IMR-90 (cell line): ENCODE measurements at regions of chr11 and their contacts with region 1.

Region 1: DNA sequence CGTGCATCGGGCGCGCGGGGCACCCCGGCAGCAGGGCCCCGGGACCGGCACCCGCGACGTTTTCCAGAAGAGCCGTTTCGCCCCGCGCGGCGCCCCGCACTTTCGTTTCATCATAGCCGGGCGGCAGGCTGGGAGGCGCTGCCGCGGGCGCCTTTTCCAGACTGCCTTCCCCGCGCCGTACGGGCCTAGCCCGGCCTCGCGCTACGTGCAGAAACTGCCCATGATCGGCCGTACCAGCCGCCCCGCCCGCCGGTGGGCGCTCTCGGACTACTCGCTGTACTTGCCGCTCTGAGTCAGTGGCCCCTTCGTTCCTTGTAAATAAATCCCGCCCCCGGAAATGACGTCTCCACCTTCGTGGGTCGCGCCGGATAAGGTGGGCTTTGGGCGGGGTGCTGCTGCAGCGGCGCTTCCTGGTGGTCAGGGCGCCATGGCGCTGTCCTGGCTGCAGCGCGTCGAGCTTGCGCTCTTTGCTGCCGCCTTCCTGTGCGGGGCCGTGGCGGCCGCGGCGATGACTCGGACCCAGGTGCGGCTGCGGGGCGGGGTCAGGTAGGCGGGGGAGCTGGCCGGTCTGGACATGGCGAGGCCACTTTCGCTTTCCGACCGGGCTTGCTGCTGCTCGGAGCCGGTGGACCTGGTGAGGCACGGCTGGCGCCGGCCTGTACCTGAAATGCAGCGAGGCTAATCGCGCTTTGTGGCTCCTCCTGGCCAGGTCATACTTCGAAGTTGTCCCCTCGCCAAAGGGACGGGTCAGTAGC is at the start of gene TMEM179B:
- DNase-seq: peak; percentile 98
- ATAC-seq: peak; percentile 68
- H3K4me3 ChIP-seq: peak within 1 kb of the TSS; percentile 94
- H3K27ac ChIP-seq: peak within 1 kb of the TSS; percentile 89
- H3K4me1 ChIP-seq: peaks cover 11% of the 10 kb centered on the region
- H3K27me3 ChIP-seq: no peaks in the 10 kb centered on the region
- CTCF ChIP-seq: peak; percentile 74
- POLR2A ChIP-seq: peak; percentile 81
- RAD21 ChIP-seq: peak; percentile 57
- total RNA-seq, gene TMEM179B: 20.0 and 29.4 TPM in 2 replicates

Region 2: GRCh38 chr11:62712413-62712812 is 74.8 kb before region 1 on chr11:
- CTCF ChIA-PET with region 1: no interaction called
- POLR2A ChIA-PET with region 1: no interaction called
- dilution Hi-C with region 1: no loop called
- in situ Hi-C with region 1: no loop called
- intact Hi-C with region 1: no loop called
- DNase-seq: peak; percentile 41
- ATAC-seq: no peak
- H3K4me3 ChIP-seq: no peak overlapping the region
- H3K27ac ChIP-seq: peak overlapping the region; percentile 41; the same call in 1 of the 2 replicates
- H3K4me1 ChIP-seq: peaks cover 12% of the 10 kb centered on the region
- H3K27me3 ChIP-seq: no peaks in the 10 kb centered on the region
- CTCF ChIP-seq: no peak
- POLR2A ChIP-seq: no peak
- RAD21 ChIP-seq: no peak

Region 3: DNA sequence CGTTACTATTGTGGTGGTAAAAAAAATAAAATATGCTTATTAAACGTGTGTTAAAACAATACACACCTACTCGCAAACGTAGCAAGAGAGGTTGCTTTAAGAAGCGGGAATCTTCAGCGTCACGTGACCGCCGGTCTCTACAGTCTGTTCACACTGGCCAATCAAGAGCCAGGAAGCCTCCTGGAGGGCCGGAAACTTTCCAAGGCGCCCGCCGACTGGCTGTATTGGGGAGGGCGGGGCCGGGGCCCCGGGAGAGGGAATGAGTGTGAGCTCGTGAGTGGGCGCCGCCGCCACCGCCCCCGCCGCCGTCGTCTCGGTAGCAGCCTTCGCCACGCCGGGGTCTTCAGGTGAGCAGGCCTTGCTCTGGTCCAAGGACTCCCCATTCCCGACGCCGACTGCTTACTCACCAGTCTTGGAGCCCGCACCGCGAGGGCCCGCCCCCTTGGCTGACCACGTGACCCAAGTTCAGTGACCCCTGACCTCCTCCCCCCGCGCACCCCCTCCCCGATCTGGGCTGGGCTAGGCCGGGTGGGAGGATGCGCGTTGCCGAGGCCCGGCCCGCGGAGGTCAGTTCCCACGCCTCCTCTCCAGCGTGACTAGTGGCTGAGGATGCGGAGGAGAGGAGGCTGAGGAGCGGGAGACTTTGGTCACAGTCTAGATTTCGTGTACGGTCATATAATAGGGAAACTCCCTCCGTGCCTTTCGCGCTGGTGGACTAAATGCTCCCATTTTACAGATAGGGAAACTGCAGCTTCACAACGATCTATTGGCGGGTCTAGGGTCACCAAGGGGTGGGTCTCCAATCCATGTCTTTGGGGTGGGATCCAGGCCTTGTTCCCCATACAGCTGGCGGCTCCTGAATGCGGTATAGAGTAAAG is 15.8 kb before region 1 on chr11 and contains the start of gene TAF6L:
- CTCF ChIA-PET with region 1: interaction called, 26 read pairs
- POLR2A ChIA-PET with region 1: no interaction called
- dilution Hi-C with region 1: no loop called
- in situ Hi-C with region 1: no loop called
- intact Hi-C with region 1: no loop called
- DNase-seq: peak; percentile 95
- ATAC-seq: peak; percentile 99
- H3K4me3 ChIP-seq: peak within 1 kb of the TSS; percentile 81
- H3K27ac ChIP-seq: peak within 1 kb of the TSS; percentile 96
- H3K4me1 ChIP-seq: peaks cover 3% of the 10 kb centered on the region
- H3K27me3 ChIP-seq: no peaks in the 10 kb centered on the region
- CTCF ChIP-seq: no peak
- POLR2A ChIP-seq: peak; percentile 75
- RAD21 ChIP-seq: no peak
- total RNA-seq, gene TAF6L: 8.1 and 9.5 TPM in 2 replicates

Region 4: GRCh38 chr11:62805076-62805892 is 18.1 kb after region 1 on chr11 and contains the start of gene NXF1:
- CTCF ChIA-PET with region 1: interaction called, 4 read pairs
- POLR2A ChIA-PET with region 1: interaction called, 3 read pairs
- dilution Hi-C with region 1: no loop called
- in situ Hi-C with region 1: no loop called
- intact Hi-C with region 1: loop called (anchors 2 kb)
- DNase-seq: peak; percentile 92
- ATAC-seq: peak; percentile 87
- H3K4me3 ChIP-seq: peak within 1 kb of the TSS; percentile 82
- H3K27ac ChIP-seq: peak within 1 kb of the TSS; percentile 71
- H3K4me1 ChIP-seq: peaks cover 26% of the 10 kb centered on the region
- H3K27me3 ChIP-seq: no peaks in the 10 kb centered on the region
- CTCF ChIP-seq: no peak
- POLR2A ChIP-seq: peak; percentile 100
- RAD21 ChIP-seq: no peak
- total RNA-seq, gene NXF1: 26.3 and 27.5 TPM in 2 replicates

Region 5: DNA sequence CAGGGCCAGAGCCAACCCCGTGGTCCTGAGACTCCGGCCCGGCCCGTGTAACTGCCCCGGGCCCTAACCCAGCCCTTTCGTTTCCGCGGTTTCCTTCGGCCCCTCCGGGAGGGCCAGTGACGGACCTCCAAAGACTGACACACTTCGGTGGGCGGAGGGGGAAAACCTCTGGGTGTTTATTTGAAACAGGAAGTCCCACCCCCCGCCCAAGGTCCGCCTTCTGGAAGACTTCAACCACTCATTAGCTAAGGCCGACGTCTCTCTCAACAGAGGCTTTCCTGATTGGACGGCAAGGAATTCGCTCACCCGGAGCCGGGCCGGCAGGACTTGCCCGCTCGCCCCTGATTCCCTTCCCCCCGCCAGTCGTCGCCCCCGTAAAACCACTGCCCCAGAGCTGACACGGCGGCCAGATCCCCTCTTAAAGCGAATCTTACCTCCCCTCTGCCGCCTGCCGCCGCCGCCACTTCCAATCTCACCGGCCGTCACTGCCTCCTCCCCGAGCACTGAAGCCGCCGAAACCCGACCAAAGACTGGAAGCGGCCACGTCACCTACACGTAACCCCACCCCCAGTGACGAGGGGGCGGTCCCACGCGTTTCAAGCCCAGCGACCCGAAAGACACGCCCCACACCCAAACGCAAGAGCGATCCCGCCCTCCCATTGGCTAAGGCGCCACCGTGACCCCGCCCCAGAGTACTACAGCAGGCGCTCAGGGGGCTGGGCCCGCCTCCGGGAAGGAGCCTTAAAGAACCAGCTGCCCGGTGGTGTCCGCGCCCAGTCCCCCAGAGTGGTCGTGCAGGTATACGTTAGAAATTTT is 44.5 kb after region 1 on chr11 and contains the start of gene STX5:
- CTCF ChIA-PET with region 1: no interaction called
- POLR2A ChIA-PET with region 1: interaction called, 14 read pairs
- dilution Hi-C with region 1: no loop called
- in situ Hi-C with region 1: no loop called
- intact Hi-C with region 1: loop called (anchors 2 kb)
- DNase-seq: peak; percentile 99
- ATAC-seq: peak; percentile 95
- H3K4me3 ChIP-seq: peak within 1 kb of the TSS; percentile 94
- H3K27ac ChIP-seq: peak within 1 kb of the TSS; percentile 95
- H3K4me1 ChIP-seq: peaks cover 12% of the 10 kb centered on the region
- H3K27me3 ChIP-seq: no peaks in the 10 kb centered on the region
- CTCF ChIP-seq: no peak
- POLR2A ChIP-seq: peak; percentile 96
- RAD21 ChIP-seq: no peak
- total RNA-seq, gene STX5: 48.6 and 49.5 TPM in 2 replicates

Region 6: DNA sequence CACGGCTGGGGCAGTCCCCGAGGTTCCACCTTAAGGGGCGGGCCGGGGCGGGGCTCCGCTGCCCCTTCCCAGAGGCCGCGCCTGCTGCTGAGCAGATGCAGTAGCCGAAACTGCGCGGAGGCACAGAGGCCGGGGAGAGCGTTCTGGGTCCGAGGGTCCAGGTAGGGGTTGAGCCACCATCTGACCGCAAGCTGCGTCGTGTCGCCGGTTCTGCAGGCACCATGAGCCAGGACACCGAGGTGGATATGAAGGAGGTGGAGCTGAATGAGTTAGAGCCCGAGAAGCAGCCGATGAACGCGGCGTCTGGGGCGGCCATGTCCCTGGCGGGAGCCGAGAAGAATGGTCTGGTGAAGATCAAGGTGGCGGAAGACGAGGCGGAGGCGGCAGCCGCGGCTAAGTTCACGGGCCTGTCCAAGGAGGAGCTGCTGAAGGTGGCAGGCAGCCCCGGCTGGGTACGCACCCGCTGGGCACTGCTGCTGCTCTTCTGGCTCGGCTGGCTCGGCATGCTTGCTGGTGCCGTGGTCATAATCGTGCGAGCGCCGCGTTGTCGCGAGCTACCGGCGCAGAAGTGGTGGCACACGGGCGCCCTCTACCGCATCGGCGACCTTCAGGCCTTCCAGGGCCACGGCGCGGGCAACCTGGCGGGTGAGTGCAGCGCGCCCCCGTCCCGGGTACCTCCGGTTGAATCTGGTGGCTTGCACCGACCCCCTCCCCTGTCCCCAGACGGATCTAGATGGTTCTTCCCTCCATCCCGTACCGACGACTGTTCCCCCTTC is 93.8 kb after region 1 on chr11 and contains the start of gene SLC3A2:
- CTCF ChIA-PET with region 1: interaction called, 7 read pairs
- POLR2A ChIA-PET with region 1: no interaction called
- dilution Hi-C with region 1: no loop called
- in situ Hi-C with region 1: no loop called
- intact Hi-C with region 1: loop called (anchors 5 kb)
- DNase-seq: peak; percentile 82
- ATAC-seq: peak; percentile 85
- H3K4me3 ChIP-seq: peak within 1 kb of the TSS; percentile 92
- H3K27ac ChIP-seq: peak within 1 kb of the TSS; percentile 98
- H3K4me1 ChIP-seq: peaks cover 23% of the 10 kb centered on the region
- H3K27me3 ChIP-seq: no peaks in the 10 kb centered on the region
- CTCF ChIP-seq: peak; percentile 71
- POLR2A ChIP-seq: peak; percentile 97
- RAD21 ChIP-seq: peak; percentile 61
- total RNA-seq, gene SLC3A2: 114 and 140 TPM in 2 replicates